GM13976 (cell line): ENCODE measurements at regions of chr3 and their contacts with region 1.

Region 1: DNA sequence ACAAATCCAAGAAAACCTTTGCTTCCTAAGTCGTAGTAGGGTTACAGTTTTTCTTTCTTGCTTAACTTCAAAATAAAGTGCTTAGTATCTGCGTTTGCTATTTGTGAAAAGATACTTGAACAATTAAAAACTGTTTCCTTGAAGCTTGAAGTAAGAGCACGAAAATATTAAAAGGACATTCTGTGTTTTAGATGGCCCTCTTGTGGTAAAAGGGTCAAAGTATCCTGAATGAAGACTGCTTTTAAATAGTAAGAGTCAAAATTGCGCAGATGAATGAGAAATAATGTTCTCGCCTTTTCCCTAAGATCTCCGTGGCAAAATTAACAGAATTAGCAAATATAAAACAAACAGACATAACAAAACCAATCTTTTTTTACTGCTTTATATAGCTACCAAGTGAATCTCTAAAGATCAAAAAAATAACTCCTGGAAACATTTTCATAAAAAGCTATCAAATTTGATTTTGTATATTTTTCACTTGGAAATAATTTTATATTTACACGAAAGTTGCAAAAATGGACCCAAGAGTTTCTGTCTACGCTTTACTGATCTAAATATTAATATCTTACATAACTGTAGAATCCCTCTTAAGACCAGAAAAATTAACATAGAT is 175.4 kb downstream of the MBNL1 start:
- DNase-seq: peak; percentile 31
- CTCF ChIP-seq: peak; percentile 41

Region 2: DNA sequence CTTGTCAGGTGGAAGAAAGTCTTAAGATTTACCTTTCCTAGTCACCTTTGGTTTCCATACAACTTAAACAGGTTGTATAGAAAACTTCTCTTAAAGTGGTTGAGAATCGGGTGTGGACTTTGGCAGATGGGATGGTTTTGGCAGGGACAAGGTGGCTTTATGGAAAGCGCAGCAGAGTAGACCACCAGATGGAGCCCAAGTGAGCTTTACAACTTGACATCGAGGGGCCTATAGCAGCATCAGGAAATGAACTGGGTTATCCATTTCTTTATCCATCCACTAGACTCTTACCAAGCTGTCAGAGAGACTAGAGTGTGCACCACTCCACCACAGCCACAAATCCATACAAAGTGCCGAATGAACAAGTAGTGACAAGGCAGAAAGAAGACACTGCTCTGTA is 260.7 kb before region 1 on chr3:
- in situ Hi-C with region 1: loop called (anchors 10 kb)
- DNase-seq: no peak
- CTCF ChIP-seq: peak; percentile 51

Region 3: GRCh38 chr3:154209513-154210481 is 1765.7 kb after region 1 on chr3:
- in situ Hi-C with region 1: no loop called
- DNase-seq: no peak
- CTCF ChIP-seq: no peak